GM23248 (cell line): ENCODE measurements at regions of chr10 and their contacts with region 1.

Region 1: GRCh38 chr10:96513698-96514561 is at the start of gene TLL2:
- DNase-seq: peak; percentile 94
- H3K4me3 ChIP-seq: peak within 1 kb of the TSS; percentile 68
- H3K27ac ChIP-seq: no peak within 1 kb of the TSS
- H3K4me1 ChIP-seq: peaks cover 16% of the 10 kb centered on the region
- H3K27me3 ChIP-seq: no peaks in the 10 kb centered on the region
- total RNA-seq, gene TLL2: 0.43 TPM in 1 of 2 replicates, not detected in the other

Region 2: DNA sequence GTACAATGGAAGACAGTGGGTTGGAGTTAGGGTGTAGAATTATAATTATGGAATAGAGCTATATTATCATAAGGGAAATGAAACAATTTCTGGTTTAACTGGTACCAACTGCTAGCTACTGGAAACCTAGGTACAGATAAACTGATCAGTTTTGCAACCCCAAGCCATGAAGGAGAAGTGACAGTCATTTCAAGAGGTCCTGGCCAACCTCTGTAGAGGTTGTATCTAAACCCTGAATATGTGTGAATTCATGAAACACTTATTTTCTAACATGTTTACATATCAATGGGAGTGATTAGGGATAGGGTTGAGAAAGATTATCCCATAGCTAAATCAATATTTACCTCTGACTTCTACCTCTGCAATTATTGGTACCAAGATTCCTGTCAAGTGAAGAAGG is 636.0 kb before region 1 on chr10:
- in situ Hi-C with region 1: no loop called
- DNase-seq: no peak
- H3K4me3 ChIP-seq: no peak overlapping the region
- H3K27ac ChIP-seq: no peak overlapping the region
- H3K4me1 ChIP-seq: no peaks in the 10 kb centered on the region
- H3K27me3 ChIP-seq: no peaks in the 10 kb centered on the region

Region 3: DNA sequence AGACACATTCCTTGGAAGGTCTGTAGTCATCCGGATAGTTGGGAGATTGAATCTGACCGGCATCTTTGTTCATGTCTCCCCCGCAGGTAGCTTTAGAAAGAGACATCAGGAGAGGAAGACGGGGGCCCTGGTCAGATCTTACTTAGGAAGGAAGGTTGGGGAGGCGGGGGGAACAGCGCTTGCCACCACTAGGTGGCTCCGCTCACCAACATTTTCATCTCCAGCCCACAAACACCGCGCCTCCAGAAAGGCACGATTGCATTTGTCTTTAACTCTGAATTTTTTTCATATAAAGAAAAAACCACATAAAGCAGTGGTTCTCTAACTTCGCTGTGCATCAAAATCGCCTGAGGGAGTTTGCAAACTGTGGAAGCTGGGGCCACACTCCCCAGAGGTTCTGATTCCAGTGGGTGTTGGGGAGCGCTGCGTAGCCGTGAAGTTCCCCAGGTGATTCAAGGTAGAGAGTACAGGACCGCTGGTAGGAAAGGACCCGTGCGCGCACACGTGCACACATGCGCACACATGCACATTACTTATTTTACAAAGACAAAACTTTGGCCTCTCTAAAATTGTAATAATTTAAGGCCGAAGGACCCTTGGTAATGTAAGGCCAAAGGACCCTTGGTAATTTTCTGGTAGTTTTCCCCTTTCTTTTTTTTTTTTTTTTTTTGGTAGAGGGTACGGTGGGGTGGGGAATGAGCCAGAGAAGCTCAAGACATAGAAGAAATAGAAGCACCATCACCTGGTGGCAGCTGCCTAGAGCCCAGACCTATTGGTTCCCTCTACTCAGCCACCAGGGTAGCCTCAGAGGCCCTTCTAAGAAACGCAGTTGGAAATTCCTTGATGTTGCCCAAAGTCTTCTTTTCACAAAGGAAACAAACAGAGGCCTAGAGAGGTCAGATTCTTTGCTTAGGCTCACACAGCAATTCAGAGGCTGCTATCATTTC is 117.7 kb before region 1 on chr10:
- in situ Hi-C with region 1: loop called (anchors 10 kb)
- DNase-seq: peak; percentile 85
- H3K4me3 ChIP-seq: no peak overlapping the region
- H3K27ac ChIP-seq: no peak overlapping the region
- H3K4me1 ChIP-seq: no peaks in the 10 kb centered on the region
- H3K27me3 ChIP-seq: peaks cover 54% of the 10 kb centered on the region

Region 4: DNA sequence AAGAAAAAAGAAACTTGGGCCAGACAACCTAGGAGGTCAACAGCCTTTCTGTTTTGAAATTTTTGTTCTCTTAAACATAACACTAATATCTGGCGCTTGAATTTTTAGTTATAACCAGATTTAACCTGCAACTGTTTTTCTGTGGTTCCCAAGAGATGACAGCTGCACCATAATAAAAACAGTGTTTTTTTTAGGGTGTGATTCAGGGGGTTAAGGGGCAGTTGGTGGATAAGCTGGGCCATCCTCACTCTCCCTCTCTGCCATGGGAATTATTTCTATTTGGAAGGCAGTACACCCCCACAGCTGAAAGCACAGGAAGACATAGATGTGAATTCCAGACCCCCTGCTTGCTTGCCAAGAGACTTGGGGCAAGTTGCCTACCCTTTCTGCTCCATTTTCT is 93.0 kb after region 1 on chr10:
- in situ Hi-C with region 1: no loop called
- DNase-seq: no peak
- H3K4me3 ChIP-seq: no peak overlapping the region
- H3K27ac ChIP-seq: no peak overlapping the region
- H3K4me1 ChIP-seq: peaks cover 9% of the 10 kb centered on the region; the same call in 1 of the 2 replicates
- H3K27me3 ChIP-seq: peaks cover 14% of the 10 kb centered on the region; the same call in 1 of the 2 replicates